Vagina (tissue), 2 donors: ENCODE measurements at regions of chr16 and their contacts with region 1.

Region 1: DNA sequence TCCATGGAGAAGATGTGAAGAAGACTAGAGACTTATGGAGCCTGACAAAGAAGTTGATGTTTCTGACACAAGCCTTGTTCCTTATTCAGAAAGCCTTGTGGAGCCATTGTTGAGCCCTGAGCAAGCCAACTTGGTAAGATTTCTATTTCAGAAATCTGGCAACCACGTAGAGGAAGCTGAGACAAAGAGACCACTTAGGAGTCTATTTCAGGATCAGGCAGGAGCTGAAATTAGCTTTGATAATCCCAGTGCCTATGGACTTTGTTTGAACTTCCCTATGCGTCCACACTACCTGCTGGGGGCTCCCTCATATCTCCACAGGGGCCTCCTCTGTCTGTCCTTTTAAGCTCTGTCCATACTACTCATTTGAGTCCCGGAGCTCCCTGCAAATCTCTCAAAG is 540.0 kb upstream of the GOT2 start:
- DNase-seq: no peak
- H3K4me3 ChIP-seq: no peak overlapping the region
- H3K27ac ChIP-seq: no peak overlapping the region
- H3K4me1 ChIP-seq: no peaks in the 10 kb centered on the region
- H3K27me3 ChIP-seq: no peaks in the 10 kb centered on the region
- CTCF ChIP-seq: no peak
- POLR2A ChIP-seq: no peak

Region 2: GRCh38 chr16:60586493-60586892 is 1312.4 kb after region 1 on chr16:
- intact Hi-C with region 1: loop called (anchors 5 kb)
- DNase-seq: no peak
- H3K4me3 ChIP-seq: no peak overlapping the region
- H3K27ac ChIP-seq: no peak overlapping the region
- H3K4me1 ChIP-seq: no peaks in the 10 kb centered on the region
- H3K27me3 ChIP-seq: no peaks in the 10 kb centered on the region
- CTCF ChIP-seq: no peak
- POLR2A ChIP-seq: no peak